GM18951 (cell line): ENCODE measurements at regions of chr7 and their contacts with region 1.

Region 1: GRCh38 chr7:131225619-131226513 is 101.8 kb upstream of the MKLN1 start:
- POLR2A ChIP-seq: no peak

Region 2: DNA sequence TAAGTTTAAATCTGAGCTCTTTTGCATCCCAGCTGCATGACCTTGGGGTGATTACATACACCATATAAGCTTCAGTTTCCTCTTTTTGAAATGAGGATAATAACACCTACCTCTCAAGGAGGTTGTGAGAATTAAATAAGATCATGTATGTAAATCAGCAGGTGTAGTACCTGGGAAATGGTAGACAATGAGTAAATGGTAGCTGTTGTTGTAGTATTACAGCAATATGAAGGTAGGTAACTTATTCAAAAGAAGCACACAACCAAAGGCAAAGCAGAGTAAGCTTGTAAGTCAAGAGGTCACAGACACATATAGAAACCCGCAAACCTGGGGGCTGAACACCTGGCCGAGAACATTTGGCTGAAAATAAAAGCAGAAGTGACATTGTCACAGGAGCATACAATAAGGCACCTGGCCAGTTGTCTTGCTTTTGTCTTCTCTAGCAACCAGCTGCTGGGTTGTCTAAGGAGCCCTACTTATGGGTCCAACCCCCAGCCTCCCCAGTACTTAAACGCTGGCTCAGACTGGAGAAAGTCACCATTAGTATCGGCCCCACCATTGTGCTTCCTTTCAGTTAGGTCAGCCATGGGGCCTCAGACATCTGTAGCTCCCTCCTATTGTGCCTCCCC is 101.8 kb before region 1 on chr7:
- in situ Hi-C with region 1: loop called (anchors 10 kb)
- POLR2A ChIP-seq: no peak

Region 3: GRCh38 chr7:131488361-131488760 is 262.5 kb after region 1 on chr7:
- in situ Hi-C with region 1: no loop called
- POLR2A ChIP-seq: no peak